ENCODE measurements at regions of chr7 and their contacts with region 1.

Region 1: DNA sequence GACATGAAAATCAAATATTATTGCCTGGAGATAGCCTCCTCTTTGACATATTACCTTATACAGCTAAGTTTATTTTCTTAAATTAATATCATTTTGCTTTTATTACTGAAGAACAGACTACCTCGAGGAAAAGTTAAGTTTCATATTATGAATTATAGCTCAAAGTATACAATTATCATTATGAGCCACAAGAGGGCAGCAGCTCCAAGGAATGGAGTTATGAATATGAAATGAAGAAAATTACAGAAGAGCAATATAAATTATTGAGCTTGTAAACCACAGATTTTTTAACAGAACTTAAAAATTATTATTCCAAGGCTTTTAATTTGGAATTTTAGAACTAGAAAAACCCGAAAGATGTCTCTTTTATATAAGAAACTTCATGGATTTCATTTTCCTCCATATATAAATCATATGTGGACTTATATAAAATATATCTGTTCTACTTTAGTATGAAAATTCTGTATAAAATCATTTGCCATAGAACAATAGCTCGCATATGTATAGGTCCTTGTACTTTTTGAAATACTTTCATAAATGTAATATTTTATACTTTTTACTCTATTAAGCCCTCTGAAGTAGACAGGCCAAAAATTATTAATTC is 40.1 kb downstream of the IQUB start:
- H3K4me3 Mint-ChIP-seq: no peak overlapping the region
- H3K27ac Mint-ChIP-seq: no peak overlapping the region
- H3K4me1 Mint-ChIP-seq: no peaks in the 10 kb centered on the region
- H3K27me3 Mint-ChIP-seq: peaks cover 5% of the 10 kb centered on the region

Region 2: GRCh38 chr7:122935620-122936019 is 558.7 kb before region 1 on chr7:
- intact Hi-C with region 1: no loop called
- H3K4me3 Mint-ChIP-seq: no peak overlapping the region
- H3K27ac Mint-ChIP-seq: no peak overlapping the region
- H3K4me1 Mint-ChIP-seq: no peaks in the 10 kb centered on the region
- H3K27me3 Mint-ChIP-seq: no peaks in the 10 kb centered on the region

Region 3: GRCh38 chr7:123432601-123433000 is 61.7 kb before region 1 on chr7:
- intact Hi-C with region 1: no loop called
- H3K4me3 Mint-ChIP-seq: no peak overlapping the region
- H3K27ac Mint-ChIP-seq: no peak overlapping the region
- H3K4me1 Mint-ChIP-seq: no peaks in the 10 kb centered on the region
- H3K27me3 Mint-ChIP-seq: no peaks in the 10 kb centered on the region

Region 4: DNA sequence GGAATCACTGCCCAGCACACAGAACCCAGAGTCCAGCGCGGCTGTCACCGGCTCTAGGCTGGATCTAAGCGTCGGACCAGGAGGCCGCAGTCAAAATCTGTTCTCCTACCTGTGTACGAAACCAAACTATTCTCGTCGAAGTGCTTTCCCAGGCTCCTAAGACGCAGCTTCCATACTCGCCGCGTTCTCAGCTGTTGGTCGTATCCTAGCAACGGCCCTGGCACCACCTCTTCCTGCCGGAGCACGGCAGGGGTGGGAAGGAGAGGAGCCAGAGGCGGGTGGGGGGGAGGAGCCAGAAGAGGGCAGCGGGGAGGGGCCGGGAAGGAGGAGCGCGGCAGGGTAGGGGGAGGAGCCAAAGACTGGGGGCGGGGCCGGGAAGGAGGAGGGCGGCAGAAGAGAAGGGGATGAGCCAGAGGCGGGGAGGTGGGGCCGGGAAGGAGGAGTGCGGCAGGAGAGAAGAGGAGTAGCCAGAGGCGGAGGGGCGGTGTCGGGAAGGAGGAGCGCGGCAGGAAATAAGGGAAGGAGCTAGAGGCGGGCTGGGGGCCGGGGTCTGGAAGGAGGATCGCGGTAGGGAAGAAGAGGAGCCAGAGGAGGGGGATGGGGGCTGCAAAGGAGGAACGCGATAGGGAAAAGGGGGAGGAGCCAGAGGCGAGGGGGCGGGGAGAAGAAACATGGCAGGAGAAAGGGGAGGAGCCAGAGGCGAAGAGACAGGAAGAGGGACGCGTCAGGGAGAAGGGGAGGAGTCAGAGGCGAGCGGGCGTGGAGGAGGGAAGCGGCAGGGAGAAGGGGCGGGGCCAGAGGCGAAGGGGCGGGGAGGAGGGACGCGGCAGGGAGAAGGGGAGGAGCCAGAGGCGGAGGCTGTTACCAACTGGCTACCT is 40.3 kb after region 1 on chr7 and contains the start of gene IQUB:
- intact Hi-C with region 1: loop called (anchors 1 kb)
- H3K4me3 Mint-ChIP-seq: peak within 1 kb of the TSS; percentile 95
- H3K27ac Mint-ChIP-seq: peak within 1 kb of the TSS; percentile 99
- H3K4me1 Mint-ChIP-seq: peaks cover 17% of the 10 kb centered on the region
- H3K27me3 Mint-ChIP-seq: peaks cover 36% of the 10 kb centered on the region

Region 5: DNA sequence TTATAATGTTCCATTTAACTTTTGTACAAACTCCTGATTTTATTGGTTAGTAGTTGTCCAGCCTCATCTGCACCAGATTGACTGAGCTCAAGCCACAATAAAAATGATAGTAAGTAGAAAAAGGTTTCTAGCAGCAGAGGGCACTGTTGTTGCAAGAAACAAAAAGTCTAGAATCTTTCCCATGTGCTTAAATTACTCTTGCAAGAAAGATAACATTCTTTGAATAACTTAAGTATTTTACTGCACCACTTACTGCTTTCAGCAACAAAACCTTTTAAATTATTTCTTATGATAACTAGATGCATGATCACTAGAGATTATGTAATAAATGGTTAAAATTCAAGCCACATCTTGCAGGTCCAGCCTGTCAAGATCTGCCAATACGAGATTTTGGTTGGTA is 188.4 kb after region 1 on chr7:
- intact Hi-C with region 1: loop called (anchors 10 kb)
- H3K4me3 Mint-ChIP-seq: no peak overlapping the region
- H3K27ac Mint-ChIP-seq: no peak overlapping the region
- H3K4me1 Mint-ChIP-seq: peaks cover 6% of the 10 kb centered on the region
- H3K27me3 Mint-ChIP-seq: no peaks in the 10 kb centered on the region

Region 6: DNA sequence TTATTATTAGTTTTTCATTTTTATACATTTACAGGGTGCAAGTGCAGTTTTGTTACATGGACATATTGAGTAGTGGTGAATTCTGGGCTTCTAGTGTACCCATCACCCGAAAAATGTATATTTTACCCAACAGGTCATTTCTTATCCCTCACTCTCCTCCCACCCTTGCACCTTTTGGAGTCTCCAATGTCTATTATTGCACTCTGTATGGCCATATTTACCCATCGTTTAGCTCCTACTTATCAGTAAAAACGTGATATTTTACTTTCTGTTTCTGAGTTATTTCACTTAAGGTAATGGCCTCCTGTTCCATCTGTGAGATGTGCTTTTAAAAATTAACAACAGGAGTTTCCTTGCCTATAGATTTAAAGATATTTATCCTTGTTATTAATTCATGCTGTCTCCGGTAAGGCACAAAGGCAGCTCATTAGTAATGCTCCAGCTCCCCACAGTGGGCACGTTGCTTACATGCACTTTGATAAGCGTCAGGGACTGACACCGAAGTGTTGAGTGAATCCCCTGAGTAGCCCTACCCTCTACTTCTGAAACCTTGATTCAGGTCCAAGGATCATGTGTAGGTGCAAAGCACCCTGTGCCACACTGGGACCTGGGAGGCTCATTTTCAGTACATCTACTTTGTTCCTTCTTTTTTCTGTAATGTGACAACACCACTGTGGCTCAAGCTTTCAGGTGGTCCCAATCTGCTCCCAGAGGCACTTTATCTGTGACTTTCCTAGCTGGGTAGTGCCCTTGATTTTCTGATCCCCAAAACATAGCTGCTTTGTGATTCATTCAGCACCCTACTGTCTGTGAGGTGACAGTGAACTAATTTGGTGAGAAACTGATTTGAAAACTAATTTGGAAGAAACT is 377.9 kb after region 1 on chr7:
- intact Hi-C with region 1: loop called (anchors 5 kb)
- H3K4me3 Mint-ChIP-seq: no peak overlapping the region
- H3K27ac Mint-ChIP-seq: no peak overlapping the region
- H3K4me1 Mint-ChIP-seq: peaks cover 2% of the 10 kb centered on the region
- H3K27me3 Mint-ChIP-seq: peaks cover 10% of the 10 kb centered on the region